ENCODE measurements at regions of chr1 and their contacts with region 1.

Region 1: DNA sequence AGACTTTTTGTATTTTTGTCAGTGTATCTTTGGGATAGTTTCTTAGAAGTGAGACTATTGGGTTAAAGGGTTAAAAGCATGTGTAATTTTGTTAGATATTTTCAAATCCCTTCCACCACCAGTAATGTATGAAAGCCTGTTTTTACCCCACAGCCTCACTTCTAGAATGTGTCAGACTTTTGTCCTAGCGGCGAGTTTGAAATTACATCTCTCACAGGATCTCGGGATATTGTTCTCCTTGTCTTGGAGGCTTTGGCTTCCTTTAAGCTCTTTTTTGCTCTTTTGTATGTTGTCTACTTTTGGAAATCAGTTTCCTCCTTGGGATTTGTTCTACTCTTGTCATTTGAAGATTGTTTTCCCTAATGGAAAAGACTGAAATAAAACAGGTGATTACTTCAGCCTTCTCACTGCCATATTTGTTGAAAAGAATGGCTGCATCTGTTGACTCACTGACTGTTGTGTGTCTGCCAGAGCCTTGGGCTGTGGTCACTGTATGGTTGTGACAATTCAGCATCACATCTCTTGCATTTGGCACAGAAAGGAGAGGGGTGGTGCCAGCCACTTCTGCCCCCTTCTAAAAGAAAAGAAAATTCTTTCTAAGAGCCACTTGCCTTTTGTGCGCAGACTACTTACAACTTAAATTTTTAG is 22.6 kb downstream of the ST3GAL3 start:
- DNase-seq: no peak
- H3K4me3 Mint-ChIP-seq: no peak overlapping the region
- H3K27ac Mint-ChIP-seq: no peak overlapping the region
- H3K4me1 Mint-ChIP-seq: no peaks in the 10 kb centered on the region
- H3K27me3 Mint-ChIP-seq: no peaks in the 10 kb centered on the region
- CTCF ChIP-seq: no peak

Region 2: GRCh38 chr1:43688594-43689000 is 41.3 kb before region 1 on chr1:
- CTCF ChIA-PET with region 1: interaction called, 10 read pairs
- intact Hi-C with region 1: no loop called
- DNase-seq: no peak
- H3K4me3 Mint-ChIP-seq: no peak overlapping the region
- H3K27ac Mint-ChIP-seq: no peak overlapping the region
- H3K4me1 Mint-ChIP-seq: no peaks in the 10 kb centered on the region
- H3K27me3 Mint-ChIP-seq: no peaks in the 10 kb centered on the region
- CTCF ChIP-seq: no peak

Region 3: GRCh38 chr1:43706598-43707495 is 23.1 kb before region 1 on chr1:
- CTCF ChIA-PET with region 1: no interaction called
- intact Hi-C with region 1: no loop called
- DNase-seq: peak; percentile 93
- H3K4me3 Mint-ChIP-seq: peak overlapping the region; percentile 92
- H3K27ac Mint-ChIP-seq: peak overlapping the region; percentile 70
- H3K4me1 Mint-ChIP-seq: peaks cover 35% of the 10 kb centered on the region
- H3K27me3 Mint-ChIP-seq: no peaks in the 10 kb centered on the region
- CTCF ChIP-seq: no peak

Region 4: GRCh38 chr1:43783671-43784205 is 53.8 kb after region 1 on chr1:
- CTCF ChIA-PET with region 1: no interaction called
- intact Hi-C with region 1: no loop called
- DNase-seq: peak; percentile 57
- H3K4me3 Mint-ChIP-seq: no peak overlapping the region
- H3K27ac Mint-ChIP-seq: peak overlapping the region; percentile 50
- H3K4me1 Mint-ChIP-seq: peaks cover 23% of the 10 kb centered on the region
- H3K27me3 Mint-ChIP-seq: no peaks in the 10 kb centered on the region
- CTCF ChIP-seq: no peak

Measured in Calu3 (cell line).